Activated CD4-positive, alpha-beta T cell treated with anti-CD3 and anti-CD28 coated beads for 36 hours (primary cell): ENCODE measurements at regions of chr20 and their contacts with region 1.

Region 1: DNA sequence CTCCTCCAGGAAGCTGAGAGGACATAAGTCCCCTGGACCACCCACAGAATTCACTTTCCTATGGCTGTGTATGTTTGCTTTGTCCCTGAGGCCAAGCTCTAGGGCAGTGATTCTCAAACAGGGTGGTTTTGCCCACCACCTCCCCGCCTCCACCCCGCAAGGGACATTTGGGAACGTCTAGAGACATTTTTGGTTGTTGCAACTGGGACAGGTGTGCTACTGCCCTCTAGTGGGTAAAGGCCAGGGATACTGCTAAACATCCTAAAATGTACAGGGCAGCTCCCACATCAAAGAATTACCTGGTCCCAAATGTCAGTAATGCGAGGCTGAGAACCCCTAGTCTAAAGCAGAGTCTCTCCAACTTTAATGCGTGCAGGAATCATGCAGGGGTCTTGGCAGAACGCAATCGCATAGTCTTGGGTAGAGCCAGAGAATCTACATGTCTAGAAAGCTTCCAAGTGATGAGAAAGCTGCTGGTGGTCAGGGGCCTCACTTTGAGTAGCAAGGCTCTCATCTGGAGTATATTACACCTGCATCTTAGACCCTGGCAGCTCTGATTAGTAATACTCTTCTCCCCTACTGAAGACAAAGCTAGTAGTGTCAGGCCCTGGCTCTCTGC is 5.1 kb downstream of the KCNS1 start:
- DNase-seq: peak; percentile 76
- ATAC-seq: peak; percentile 44
- H3K4me3 Mint-ChIP-seq: no peak overlapping the region
- H3K27ac Mint-ChIP-seq: no peak overlapping the region
- H3K4me1 Mint-ChIP-seq: peaks cover 11% of the 10 kb centered on the region
- H3K27me3 Mint-ChIP-seq: peaks cover 30% of the 10 kb centered on the region

Region 2: GRCh38 chr20:44747166-44748004 is 348.5 kb before region 1 on chr20:
- CTCF ChIA-PET with region 1: no interaction called
- POLR2A ChIA-PET with region 1: no interaction called
- intact Hi-C with region 1: loop called in 1 of 2 experiments (anchors 5 kb)
- DNase-seq: peak; percentile 87
- ATAC-seq: peak; percentile 60
- H3K4me3 Mint-ChIP-seq: peak overlapping the region; percentile 76
- H3K27ac Mint-ChIP-seq: peak overlapping the region; percentile 84
- H3K4me1 Mint-ChIP-seq: peaks cover 19% of the 10 kb centered on the region
- H3K27me3 Mint-ChIP-seq: peaks cover 21% of the 10 kb centered on the region

Region 3: DNA sequence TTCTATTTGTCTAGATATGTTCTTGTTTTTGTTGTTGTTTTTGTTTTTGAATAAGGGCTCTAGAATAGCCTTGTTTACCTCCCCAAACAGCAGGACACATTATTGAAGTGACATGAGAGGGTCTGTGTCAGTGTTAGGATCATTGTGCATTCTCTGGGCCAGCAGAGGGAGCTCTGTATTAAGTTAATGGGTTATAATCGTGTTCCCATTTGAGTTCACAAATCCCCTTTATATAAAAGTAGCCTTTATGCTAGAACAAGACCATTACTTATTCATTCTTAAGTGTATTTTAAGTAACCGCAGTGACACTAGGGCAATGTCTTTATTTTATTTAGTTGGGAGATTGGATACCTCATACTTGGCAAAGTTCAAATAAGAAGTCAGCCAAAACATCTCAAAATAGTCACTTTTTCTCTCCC is 84.7 kb before region 1 on chr20:
- CTCF ChIA-PET with region 1: interaction called, 26 read pairs
- POLR2A ChIA-PET with region 1: no interaction called
- intact Hi-C with region 1: loop called (anchors 1 kb)
- DNase-seq: peak; percentile 70
- ATAC-seq: peak; percentile 72
- H3K4me3 Mint-ChIP-seq: no peak overlapping the region
- H3K27ac Mint-ChIP-seq: peak overlapping the region; percentile 10
- H3K4me1 Mint-ChIP-seq: peaks cover 59% of the 10 kb centered on the region
- H3K27me3 Mint-ChIP-seq: no peaks in the 10 kb centered on the region

Region 4: GRCh38 chr20:45052698-45053429 is 43.0 kb before region 1 on chr20:
- CTCF ChIA-PET with region 1: interaction called, 77 read pairs
- POLR2A ChIA-PET with region 1: interaction called, 3 read pairs
- intact Hi-C with region 1: no loop called
- DNase-seq: no peak
- ATAC-seq: peak; percentile 59
- H3K4me3 Mint-ChIP-seq: no peak overlapping the region
- H3K27ac Mint-ChIP-seq: peak overlapping the region; percentile 73
- H3K4me1 Mint-ChIP-seq: peaks cover 77% of the 10 kb centered on the region
- H3K27me3 Mint-ChIP-seq: no peaks in the 10 kb centered on the region

Region 5: DNA sequence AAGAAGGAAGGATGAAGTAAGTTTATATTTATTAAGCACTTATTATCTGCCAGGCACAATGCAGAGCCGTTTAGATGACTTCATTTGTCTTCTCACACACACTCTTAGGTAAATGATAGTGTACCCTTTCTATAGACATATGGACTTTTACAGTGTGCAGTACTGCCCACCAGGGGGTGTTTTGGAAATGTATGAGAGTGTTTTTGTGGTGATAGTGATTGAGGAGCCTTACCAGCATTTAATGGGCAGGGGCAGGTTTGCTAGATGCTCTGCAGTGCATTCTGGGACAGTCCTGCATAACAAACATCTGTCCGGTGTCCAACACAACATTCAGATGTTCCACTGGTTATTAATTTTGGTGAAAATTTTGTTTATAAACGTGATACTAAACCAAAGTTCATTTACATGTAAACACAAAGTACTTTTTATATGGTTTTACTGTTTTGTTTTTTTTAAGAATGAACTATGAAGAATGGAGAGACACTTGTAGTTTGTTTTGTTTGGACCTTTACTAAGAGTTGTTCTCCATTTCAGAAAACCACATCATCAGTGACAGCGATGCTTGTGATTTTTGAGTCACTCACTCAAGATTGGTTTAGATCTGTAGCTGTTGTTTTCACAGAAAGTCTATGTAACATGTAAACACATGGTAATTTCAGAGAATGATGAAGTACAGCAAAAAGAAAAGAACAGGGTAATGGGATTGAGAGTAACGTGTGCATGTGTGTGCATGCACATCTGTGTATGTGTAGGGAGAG is 14.8 kb before region 1 on chr20:
- CTCF ChIA-PET with region 1: interaction called, 29 read pairs
- POLR2A ChIA-PET with region 1: no interaction called
- intact Hi-C with region 1: no loop called
- DNase-seq: no peak
- ATAC-seq: peak; percentile 33
- H3K4me3 Mint-ChIP-seq: no peak overlapping the region
- H3K27ac Mint-ChIP-seq: no peak overlapping the region
- H3K4me1 Mint-ChIP-seq: no peaks in the 10 kb centered on the region
- H3K27me3 Mint-ChIP-seq: no peaks in the 10 kb centered on the region

Region 6: DNA sequence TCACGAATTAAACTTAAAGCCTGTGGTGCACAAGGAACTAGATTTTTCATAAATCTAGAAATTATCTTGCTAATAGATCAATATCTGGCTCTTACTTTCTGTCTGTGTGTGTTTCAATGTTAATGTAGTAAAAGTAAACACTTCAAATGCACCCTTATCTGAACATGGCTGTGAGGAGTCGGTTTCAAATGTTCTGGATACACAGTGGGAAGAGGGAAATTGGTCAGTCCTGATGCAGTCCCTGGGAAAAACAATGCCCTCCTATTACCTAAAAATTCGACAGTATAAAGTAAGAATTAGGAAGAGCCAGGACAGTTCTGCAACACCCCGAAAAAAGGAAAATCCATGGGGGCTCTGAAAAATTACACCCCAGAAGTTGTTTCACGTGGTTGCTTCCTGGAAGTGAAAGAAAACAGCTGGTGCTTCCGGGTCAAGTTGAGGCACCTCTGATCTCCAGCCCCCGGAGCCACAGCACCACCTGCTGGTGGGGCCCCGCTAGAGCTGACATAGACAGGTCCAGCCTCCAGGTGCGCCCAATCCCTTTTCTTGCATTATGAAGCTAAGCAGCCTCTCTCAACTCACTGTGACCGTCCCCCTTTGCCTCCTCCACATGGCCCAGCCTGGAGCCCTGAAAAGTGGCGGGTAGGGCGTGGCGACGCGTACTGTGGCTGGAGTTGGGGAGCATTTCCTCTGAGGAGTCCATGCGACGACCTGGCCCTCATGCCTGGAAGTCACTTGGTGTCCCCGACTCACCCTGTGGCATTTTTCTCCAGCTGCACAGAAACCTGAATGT is 133.6 kb after region 1 on chr20:
- CTCF ChIA-PET with region 1: interaction called, 5 read pairs
- POLR2A ChIA-PET with region 1: no interaction called
- intact Hi-C with region 1: loop called in 1 of 2 experiments (anchors 1 kb)
- DNase-seq: peak; percentile 82
- ATAC-seq: peak; percentile 71
- H3K4me3 Mint-ChIP-seq: no peak overlapping the region
- H3K27ac Mint-ChIP-seq: no peak overlapping the region
- H3K4me1 Mint-ChIP-seq: peaks cover 2% of the 10 kb centered on the region
- H3K27me3 Mint-ChIP-seq: peaks cover 37% of the 10 kb centered on the region